ENCODE measurements at regions of chr19 and their contacts with region 1.

Region 1: GRCh38 chr19:4815426-4816201 is 15.9 kb downstream of the TICAM1 start:
- DNase-seq: peak; percentile 93
- ATAC-seq: peak; percentile 59
- H3K4me3 ChIP-seq: peak overlapping the region; percentile 21; the same call in 1 of the 2 replicates
- H3K27ac ChIP-seq: peak overlapping the region; percentile 15; the same call in 1 of the 2 replicates
- H3K4me1 ChIP-seq: peaks cover 16% of the 10 kb centered on the region
- H3K27me3 ChIP-seq: no peaks in the 10 kb centered on the region
- CTCF ChIP-seq: no peak

Region 2: GRCh38 chr19:4803736-4804695 is 11.6 kb before region 1 on chr19:
- CTCF ChIA-PET with region 1: no interaction called
- POLR2A ChIA-PET with region 1: interaction called, 11 read pairs
- intact Hi-C with region 1: no loop called
- DNase-seq: peak; percentile 80
- ATAC-seq: peak; percentile 78
- H3K4me3 ChIP-seq: no peak overlapping the region
- H3K27ac ChIP-seq: no peak overlapping the region
- H3K4me1 ChIP-seq: peaks cover 14% of the 10 kb centered on the region
- H3K27me3 ChIP-seq: no peaks in the 10 kb centered on the region
- CTCF ChIP-seq: peak; percentile 96

Region 3: DNA sequence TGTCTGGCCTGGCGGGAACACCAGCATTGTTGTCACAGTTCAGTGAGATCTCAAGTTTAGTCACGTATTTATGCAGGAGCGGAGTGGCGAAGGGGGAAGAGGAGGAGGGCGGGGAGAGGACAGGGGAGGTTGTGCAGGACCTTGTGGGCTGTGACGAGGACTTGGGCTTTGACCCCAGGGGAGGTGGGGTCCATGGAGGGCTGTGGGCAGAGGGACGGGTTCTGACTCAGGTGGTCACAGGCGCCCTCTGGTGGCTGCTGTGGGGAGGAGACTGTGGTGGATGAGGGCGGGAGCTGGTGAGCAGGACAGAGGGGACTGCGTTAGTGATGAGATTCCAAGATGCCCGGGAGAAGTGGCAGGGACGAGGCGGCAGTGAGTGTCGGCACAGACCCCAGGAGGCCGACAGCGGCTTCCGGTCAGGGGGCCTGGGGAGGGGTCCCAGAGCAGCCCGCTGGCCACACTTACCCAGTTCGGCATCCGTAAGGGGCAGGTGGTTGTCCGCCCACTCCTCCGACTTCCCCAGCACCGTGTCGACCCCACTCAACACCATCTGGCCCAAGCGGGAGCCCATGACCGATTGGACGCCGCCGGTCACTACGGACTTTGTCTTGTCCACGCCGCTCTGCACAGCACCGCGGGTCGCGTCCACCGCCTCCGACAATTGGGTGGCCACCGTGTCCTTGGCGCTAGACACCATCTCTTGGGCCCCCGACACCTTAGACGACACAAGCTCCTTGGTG is 36.1 kb after region 1 on chr19:
- CTCF ChIA-PET with region 1: interaction called, 31 read pairs
- POLR2A ChIA-PET with region 1: interaction called, 4 read pairs
- intact Hi-C with region 1: no loop called
- DNase-seq: peak; percentile 67
- ATAC-seq: peak; percentile 90
- H3K4me3 ChIP-seq: no peak overlapping the region
- H3K27ac ChIP-seq: no peak overlapping the region
- H3K4me1 ChIP-seq: no peaks in the 10 kb centered on the region
- H3K27me3 ChIP-seq: no peaks in the 10 kb centered on the region
- CTCF ChIP-seq: peak; percentile 95

Region 4: GRCh38 chr19:4867534-4868285 is 52.1 kb after region 1 on chr19 and contains the start of gene PLIN3:
- CTCF ChIA-PET with region 1: interaction called, 6 read pairs
- POLR2A ChIA-PET with region 1: no interaction called
- intact Hi-C with region 1: loop called (anchors 1 kb)
- DNase-seq: peak; percentile 95
- ATAC-seq: peak; percentile 74
- H3K4me3 ChIP-seq: peak within 1 kb of the TSS; percentile 80
- H3K27ac ChIP-seq: peak within 1 kb of the TSS; percentile 84
- H3K4me1 ChIP-seq: peaks cover 22% of the 10 kb centered on the region
- H3K27me3 ChIP-seq: no peaks in the 10 kb centered on the region
- CTCF ChIP-seq: no peak
- total RNA-seq, gene PLIN3: 136 and 159 TPM in 2 replicates

Region 5: GRCh38 chr19:4911786-4912672 is 96.4 kb after region 1 on chr19:
- CTCF ChIA-PET with region 1: no interaction called
- POLR2A ChIA-PET with region 1: no interaction called
- intact Hi-C with region 1: loop called (anchors 1 kb)
- DNase-seq: peak; percentile 99
- ATAC-seq: peak; percentile 59
- H3K4me3 ChIP-seq: peak overlapping the region; percentile 78
- H3K27ac ChIP-seq: peak overlapping the region; percentile 81
- H3K4me1 ChIP-seq: peaks cover 59% of the 10 kb centered on the region
- H3K27me3 ChIP-seq: no peaks in the 10 kb centered on the region
- CTCF ChIP-seq: peak; percentile 88

Region 6: GRCh38 chr19:4969772-4970531 is 154.3 kb after region 1 on chr19:
- CTCF ChIA-PET with region 1: no interaction called
- POLR2A ChIA-PET with region 1: no interaction called
- intact Hi-C with region 1: loop called (anchors 5 kb)
- DNase-seq: peak; percentile 51
- ATAC-seq: no peak
- H3K4me3 ChIP-seq: peak overlapping the region; percentile 84
- H3K27ac ChIP-seq: no peak overlapping the region
- H3K4me1 ChIP-seq: peaks cover 33% of the 10 kb centered on the region
- H3K27me3 ChIP-seq: no peaks in the 10 kb centered on the region
- CTCF ChIP-seq: no peak

Region 7: DNA sequence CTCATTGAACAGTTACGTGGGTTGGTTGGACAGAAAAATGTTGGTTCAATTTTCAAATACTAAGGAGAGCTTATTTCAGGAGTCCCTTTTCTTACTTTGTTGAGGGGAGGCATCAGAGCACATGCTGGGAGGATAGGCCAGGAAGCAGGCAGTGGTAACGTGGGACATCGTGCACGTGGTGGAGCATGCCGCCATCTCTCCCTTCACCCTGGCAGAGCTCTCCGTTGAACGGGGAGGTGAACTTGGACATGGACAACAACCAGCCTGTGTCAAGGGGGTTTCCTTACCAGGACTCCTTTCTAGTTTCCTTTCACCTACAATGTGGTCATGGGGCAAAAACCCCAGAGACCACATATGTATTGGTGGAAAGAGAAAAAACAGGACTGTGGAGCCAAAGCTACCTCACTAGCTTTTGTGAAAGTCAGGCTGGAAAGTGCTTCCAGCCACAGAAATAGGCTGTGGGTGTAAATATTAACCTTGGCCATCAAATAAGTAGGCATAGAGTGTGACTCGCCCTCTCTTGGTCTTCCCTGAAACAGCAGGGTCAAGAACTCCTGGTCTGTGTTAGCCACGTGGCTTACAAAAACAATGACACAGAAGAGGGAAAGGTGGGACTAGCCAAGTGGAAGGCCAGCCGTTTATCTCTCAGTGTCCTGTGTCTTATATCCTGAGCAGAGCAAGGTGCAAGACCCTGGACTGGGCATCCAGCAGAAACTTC is 850.3 kb after region 1 on chr19:
- CTCF ChIA-PET with region 1: no interaction called
- POLR2A ChIA-PET with region 1: no interaction called
- intact Hi-C with region 1: no loop called
- DNase-seq: peak; percentile 58
- ATAC-seq: peak; percentile 76
- H3K4me3 ChIP-seq: no peak overlapping the region
- H3K27ac ChIP-seq: no peak overlapping the region
- H3K4me1 ChIP-seq: no peaks in the 10 kb centered on the region
- H3K27me3 ChIP-seq: no peaks in the 10 kb centered on the region
- CTCF ChIP-seq: peak; percentile 42; the same call in 1 of the 2 replicates